ENCODE measurements at regions of chr10 and their contacts with region 1.

Region 1: DNA sequence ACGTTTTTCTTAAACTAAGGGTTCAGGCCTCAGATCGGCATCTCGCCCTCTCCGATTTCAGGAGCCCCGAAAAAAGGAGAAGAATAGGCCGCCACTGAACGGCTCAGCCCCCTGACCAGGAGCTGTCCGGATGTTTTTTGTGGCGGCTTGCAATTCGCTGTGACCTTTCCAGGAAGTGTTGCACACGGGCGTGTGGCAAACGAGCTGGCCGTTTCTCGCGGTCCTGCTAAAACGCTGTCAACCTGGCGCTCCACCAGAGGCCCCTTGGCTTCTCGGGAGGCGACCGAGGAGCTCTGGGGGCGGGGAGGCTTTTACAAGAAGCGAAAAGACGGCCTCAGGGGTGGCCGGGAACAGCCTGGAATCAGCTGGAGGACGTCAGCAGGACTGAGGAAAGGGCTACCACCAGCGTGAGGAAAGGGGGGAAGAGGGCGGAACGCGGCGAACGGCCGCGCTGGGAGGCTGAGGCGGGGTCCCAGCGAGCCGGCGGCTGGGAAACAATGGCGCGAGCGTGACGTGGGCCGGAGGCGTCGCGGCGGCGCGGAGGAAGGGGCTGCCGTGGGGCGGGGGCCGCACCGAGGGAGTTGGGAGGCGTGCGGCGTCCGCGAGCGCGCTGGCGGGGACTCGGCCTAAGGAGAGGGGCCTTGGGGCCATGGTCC is 493 bp downstream of the NT5C2 start:
- DNase-seq: peak; percentile 75
- H3K4me3 Mint-ChIP-seq: peak overlapping the region; percentile 99
- H3K27ac Mint-ChIP-seq: peak overlapping the region; percentile 97
- H3K4me1 Mint-ChIP-seq: peaks cover 46% of the 10 kb centered on the region
- H3K27me3 Mint-ChIP-seq: no peaks in the 10 kb centered on the region

Region 2: GRCh38 chr10:103181244-103181643 is 11.3 kb before region 1 on chr10:
- CTCF ChIA-PET with region 1: interaction called, 3 read pairs
- POLR2A ChIA-PET with region 1: interaction called, 13 read pairs
- DNase-seq: no peak
- H3K4me3 Mint-ChIP-seq: no peak overlapping the region
- H3K27ac Mint-ChIP-seq: no peak overlapping the region
- H3K4me1 Mint-ChIP-seq: peaks cover 33% of the 10 kb centered on the region
- H3K27me3 Mint-ChIP-seq: no peaks in the 10 kb centered on the region

Region 3: GRCh38 chr10:103350501-103351260 is 158.1 kb after region 1 on chr10 and contains the start of gene PCGF6:
- CTCF ChIA-PET with region 1: no interaction called
- POLR2A ChIA-PET with region 1: interaction called, 14 read pairs
- DNase-seq: peak; percentile 73
- H3K4me3 Mint-ChIP-seq: peak within 1 kb of the TSS; percentile 90
- H3K27ac Mint-ChIP-seq: peak within 1 kb of the TSS; percentile 84
- H3K4me1 Mint-ChIP-seq: peaks cover 12% of the 10 kb centered on the region
- H3K27me3 Mint-ChIP-seq: no peaks in the 10 kb centered on the region
- total RNA-seq, gene PCGF6: 13.9 to 15.1 TPM

Region 4: DNA sequence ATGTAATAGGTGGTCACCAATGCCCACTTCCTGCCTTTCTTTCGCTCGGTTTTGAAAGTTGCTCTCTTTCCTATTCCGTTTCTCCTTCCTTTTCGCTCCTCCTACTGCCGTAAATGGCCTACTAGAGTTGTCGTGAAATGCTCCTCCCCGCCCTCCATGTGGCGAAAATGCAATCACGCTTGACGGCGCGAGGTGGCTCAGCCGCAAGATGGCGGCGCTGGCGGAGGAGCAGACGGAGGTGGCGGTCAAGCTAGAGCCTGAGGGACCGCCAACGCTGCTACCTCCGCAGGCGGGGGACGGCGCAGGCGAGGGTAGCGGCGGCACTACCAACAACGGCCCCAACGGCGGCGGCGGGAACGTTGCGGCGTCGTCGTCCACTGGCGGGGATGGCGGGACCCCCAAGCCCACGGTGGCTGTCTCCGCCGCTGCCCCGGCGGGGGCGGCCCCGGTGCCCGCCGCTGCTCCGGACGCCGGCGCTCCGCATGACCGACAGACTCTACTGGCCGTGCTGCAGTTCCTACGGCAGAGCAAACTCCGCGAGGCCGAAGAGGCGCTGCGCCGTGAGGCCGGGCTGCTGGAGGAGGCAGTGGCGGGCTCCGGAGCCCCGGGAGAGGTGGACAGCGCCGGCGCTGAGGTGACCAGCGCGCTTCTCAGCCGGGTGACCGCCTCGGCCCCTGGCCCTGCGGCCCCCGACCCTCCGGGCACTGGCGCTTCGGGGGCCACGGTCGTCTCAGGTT is 175.4 kb after region 1 on chr10 and contains the start of gene TAF5:
- CTCF ChIA-PET with region 1: no interaction called
- POLR2A ChIA-PET with region 1: interaction called, 20 read pairs
- DNase-seq: peak; percentile 93
- H3K4me3 Mint-ChIP-seq: peak within 1 kb of the TSS; percentile 87
- H3K27ac Mint-ChIP-seq: peak within 1 kb of the TSS; percentile 91
- H3K4me1 Mint-ChIP-seq: peaks cover 24% of the 10 kb centered on the region
- H3K27me3 Mint-ChIP-seq: no peaks in the 10 kb centered on the region
- total RNA-seq, gene TAF5: 13.1 to 13.2 TPM

Measured in activated CD4-positive, alpha-beta memory T cell treated with anti-CD3 and anti-CD28 coated beads, Interleukin-2, amount 10 ng/mL, durations not matched to agents 7 days and 5 days (primary cell).